HepG2 (cell line): ENCODE measurements at regions of chr4 and their contacts with region 1.

Region 1: DNA sequence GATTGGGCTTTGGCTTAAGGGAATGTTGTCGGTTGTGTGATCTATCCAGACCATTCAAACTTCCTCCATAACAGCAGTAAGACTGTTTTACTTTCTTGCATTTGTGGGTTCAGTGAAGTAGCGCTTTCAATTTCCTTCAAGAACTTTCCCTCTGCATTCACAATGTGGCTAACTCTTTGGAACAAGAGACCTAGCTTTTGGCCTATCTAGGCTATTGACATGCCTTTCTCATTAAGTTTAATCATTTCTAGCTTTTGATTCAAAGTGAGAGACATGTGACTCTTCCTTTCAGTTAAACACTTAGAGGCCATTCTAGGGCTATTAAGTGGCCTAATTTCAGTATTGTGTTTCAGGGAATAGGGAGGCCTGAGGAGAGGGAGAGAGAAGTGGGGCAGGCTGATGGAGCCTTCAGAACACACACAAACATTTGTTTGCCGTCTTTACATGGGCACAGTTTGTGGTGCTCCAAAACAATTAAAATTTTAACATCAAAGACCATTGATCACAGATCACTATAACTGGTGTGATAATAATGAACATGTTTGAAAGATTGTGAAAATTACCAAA is 34.1 kb downstream of the ADH5 start:
- DNase-seq: no peak
- ATAC-seq: no peak
- H3K4me3 ChIP-seq: no peak overlapping the region
- H3K27ac ChIP-seq: no peak overlapping the region
- H3K4me1 ChIP-seq: 0 out of 2 replicates have a peak, but pooled peaks cover 6% of the 10 kb centered on the region
- H3K27me3 ChIP-seq: no peaks in the 10 kb centered on the region
- CTCF ChIP-seq: no peak
- EP300 ChIP-seq: no peak
- POLR2A ChIP-seq: no peak
- RAD21 ChIP-seq: no peak

Region 2: DNA sequence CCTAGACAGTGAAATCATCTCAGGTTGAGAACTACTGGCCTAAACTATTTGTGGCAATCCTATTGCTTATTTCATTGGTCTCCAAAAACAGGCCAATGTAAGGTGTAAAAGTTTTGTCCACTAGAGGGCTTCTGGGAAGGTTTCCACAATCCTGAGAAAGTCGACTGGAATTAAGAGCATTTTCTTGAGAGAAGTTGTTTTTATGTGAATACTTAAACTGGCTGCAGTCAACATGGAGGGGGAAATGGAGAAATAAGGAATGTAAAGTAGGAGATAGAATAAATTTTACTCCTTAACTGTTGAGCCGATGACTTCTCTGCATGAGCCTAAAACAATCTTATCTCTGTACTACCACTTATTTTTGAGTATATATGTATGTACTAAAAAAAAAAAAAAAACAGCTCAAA is 114.6 kb before region 1 on chr4:
- CTCF ChIA-PET with region 1: interaction called, 7 read pairs
- POLR2A ChIA-PET with region 1: no interaction called
- in situ Hi-C with region 1: no loop called
- intact Hi-C with region 1: loop called (anchors 5 kb)
- DNase-seq: peak; percentile 35
- ATAC-seq: peak; percentile 73
- H3K4me3 ChIP-seq: no peak overlapping the region
- H3K27ac ChIP-seq: no peak overlapping the region
- H3K4me1 ChIP-seq: peaks cover 36% of the 10 kb centered on the region
- H3K27me3 ChIP-seq: no peaks in the 10 kb centered on the region
- CTCF ChIP-seq: peak; percentile 62
- EP300 ChIP-seq: no peak
- POLR2A ChIP-seq: no peak
- RAD21 ChIP-seq: no peak